CD4-positive, alpha-beta T cell (primary cell): ENCODE measurements at regions of chr17 and their contacts with region 1.

Region 1: GRCh38 chr17:72556944-72557826 is 436.4 kb downstream of the SOX9 start:
- DNase-seq: peak; percentile 30 to 71 (median 44)
- ATAC-seq: peak; percentile 39
- H3K4me3 ChIP-seq: no peak overlapping the region
- H3K4me3 Mint-ChIP-seq: no peak overlapping the region
- H3K27ac ChIP-seq: no peak overlapping the region
- H3K27ac Mint-ChIP-seq: no peak overlapping the region
- H3K4me1 ChIP-seq: peaks cover 3% of the 10 kb centered on the region
- H3K4me1 Mint-ChIP-seq: no peaks in the 10 kb centered on the region
- H3K27me3 ChIP-seq: no peaks in the 10 kb centered on the region
- H3K27me3 Mint-ChIP-seq: no peaks in the 10 kb centered on the region
- CTCF ChIP-seq: peak; percentile 76

Region 2: GRCh38 chr17:73156166-73156840 is 599.1 kb after region 1 on chr17:
- CTCF ChIA-PET with region 1: interaction called, 8 read pairs
- POLR2A ChIA-PET with region 1: no interaction called
- intact Hi-C with region 1: loop called in 1 of 2 experiments (anchors 2 kb)
- DNase-seq: peak in 13 of 14 experiments; percentile 14 to 72 (median 43)
- ATAC-seq: peak; percentile 90
- H3K4me3 ChIP-seq: no peak overlapping the region
- H3K4me3 Mint-ChIP-seq: no peak overlapping the region
- H3K27ac ChIP-seq: no peak overlapping the region
- H3K27ac Mint-ChIP-seq: no peak overlapping the region
- H3K4me1 ChIP-seq: peaks cover 6% of the 10 kb centered on the region
- H3K4me1 Mint-ChIP-seq: peaks cover 15% of the 10 kb centered on the region
- H3K27me3 ChIP-seq: peaks cover 3 to 13% of the 10 kb centered on the region in 2 experiments
- H3K27me3 Mint-ChIP-seq: peaks cover 34% of the 10 kb centered on the region
- CTCF ChIP-seq: peak; percentile 70

Region 3: GRCh38 chr17:73371285-73371684 is 814.1 kb after region 1 on chr17:
- CTCF ChIA-PET with region 1: interaction called, 5 read pairs
- POLR2A ChIA-PET with region 1: no interaction called
- intact Hi-C with region 1: loop called (anchors 1 to 2 kb)
- DNase-seq: no peak
- ATAC-seq: no peak
- H3K4me3 ChIP-seq: no peak overlapping the region
- H3K4me3 Mint-ChIP-seq: no peak overlapping the region
- H3K27ac ChIP-seq: no peak overlapping the region
- H3K27ac Mint-ChIP-seq: no peak overlapping the region
- H3K4me1 ChIP-seq: no peaks in the 10 kb centered on the region
- H3K4me1 Mint-ChIP-seq: no peaks in the 10 kb centered on the region
- H3K27me3 ChIP-seq: no peaks in the 10 kb centered on the region
- H3K27me3 Mint-ChIP-seq: no peaks in the 10 kb centered on the region
- CTCF ChIP-seq: no peak